HEK293 (cell line): ENCODE measurements at regions of chr9 and their contacts with region 1.

Region 1: GRCh38 chr9:35814841-35815543 is at the start of gene HINT2:
- H3K4me3 ChIP-seq: peak within 1 kb of the TSS; percentile 76
- H3K27ac ChIP-seq: peak within 1 kb of the TSS; percentile 78
- H3K4me1 ChIP-seq: no peaks in the 10 kb centered on the region
- CTCF ChIP-seq: no peak

Region 2: GRCh38 chr9:35748858-35749514 is 66.0 kb before region 1 on chr9 and contains the starts of genes GBA2 and RGP1:
- CTCF ChIA-PET with region 1: interaction called, 4 read pairs
- POLR2A ChIA-PET with region 1: interaction called, 13 read pairs
- H3K4me3 ChIP-seq: peak within 1 kb of the TSS; percentile 77
- H3K27ac ChIP-seq: peak within 1 kb of the TSS; percentile 67
- H3K4me1 ChIP-seq: no peaks in the 10 kb centered on the region; the same call in 1 of the 2 replicates
- CTCF ChIP-seq: no peak

Region 3: DNA sequence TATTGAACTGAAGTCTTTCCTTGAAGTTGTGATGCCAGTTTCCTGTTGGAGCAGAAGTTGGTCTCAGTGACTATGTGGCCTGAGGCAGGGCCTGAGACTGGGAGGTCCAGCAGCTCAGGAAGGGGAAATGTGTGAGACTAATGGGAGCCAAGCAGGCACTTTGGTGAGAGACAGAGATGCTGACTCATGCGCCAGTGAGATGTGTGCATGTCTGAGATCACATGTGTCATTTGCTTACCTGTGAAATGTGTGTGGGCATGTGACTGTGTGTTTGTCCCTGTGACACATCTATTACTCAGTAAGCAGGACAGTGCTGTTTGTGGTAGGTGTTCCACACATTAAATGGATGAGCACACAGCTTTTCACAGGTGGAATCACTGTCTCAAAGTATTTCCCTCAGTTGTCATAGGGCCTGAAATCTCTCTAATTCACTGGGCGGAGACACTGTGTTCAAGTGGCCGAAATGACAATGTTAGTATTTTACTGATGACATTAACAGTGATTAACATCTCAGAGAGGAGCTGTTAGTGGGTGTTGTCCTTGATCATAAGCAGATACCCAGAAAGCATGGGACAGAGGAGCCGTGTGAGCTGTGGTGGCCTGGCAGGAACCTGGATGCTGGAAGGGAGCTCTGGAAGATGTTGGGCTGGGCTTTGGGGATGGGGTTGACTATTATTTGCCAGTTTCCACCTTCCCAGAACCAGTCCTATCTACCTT is 16.2 kb before region 1 on chr9:
- CTCF ChIA-PET with region 1: interaction called, 10 read pairs
- POLR2A ChIA-PET with region 1: interaction called, 6 read pairs
- H3K4me3 ChIP-seq: no peak overlapping the region
- H3K27ac ChIP-seq: no peak overlapping the region
- H3K4me1 ChIP-seq: no peaks in the 10 kb centered on the region
- CTCF ChIP-seq: no peak